ENCODE measurements at regions of chr3 and their contacts with region 1.

Region 1: GRCh38 chr3:88225326-88226008 is 75.7 kb downstream of the C3orf38 start:
- DNase-seq: no peak
- H3K4me3 ChIP-seq: no peak overlapping the region
- H3K27ac ChIP-seq: no peak overlapping the region
- H3K4me1 ChIP-seq: no peaks in the 10 kb centered on the region
- H3K27me3 ChIP-seq: peaks cover 3% of the 10 kb centered on the region; the same call in 1 of the 2 replicates

Region 2: GRCh38 chr3:89107461-89108290 is 882.2 kb after region 1 on chr3 and contains the start of gene EPHA3:
- in situ Hi-C with region 1: loop called (anchors 10 kb)
- DNase-seq: peak; percentile 57
- H3K4me3 ChIP-seq: peak within 1 kb of the TSS; percentile 71
- H3K27ac ChIP-seq: no peak within 1 kb of the TSS
- H3K4me1 ChIP-seq: no peaks in the 10 kb centered on the region
- H3K27me3 ChIP-seq: peaks cover 37% of the 10 kb centered on the region
- total RNA-seq, gene EPHA3: under 0.01 TPM in 1 of 2 replicates, not detected in the other